ENCODE measurements at regions of chr7 and their contacts with region 1.

Region 1: DNA sequence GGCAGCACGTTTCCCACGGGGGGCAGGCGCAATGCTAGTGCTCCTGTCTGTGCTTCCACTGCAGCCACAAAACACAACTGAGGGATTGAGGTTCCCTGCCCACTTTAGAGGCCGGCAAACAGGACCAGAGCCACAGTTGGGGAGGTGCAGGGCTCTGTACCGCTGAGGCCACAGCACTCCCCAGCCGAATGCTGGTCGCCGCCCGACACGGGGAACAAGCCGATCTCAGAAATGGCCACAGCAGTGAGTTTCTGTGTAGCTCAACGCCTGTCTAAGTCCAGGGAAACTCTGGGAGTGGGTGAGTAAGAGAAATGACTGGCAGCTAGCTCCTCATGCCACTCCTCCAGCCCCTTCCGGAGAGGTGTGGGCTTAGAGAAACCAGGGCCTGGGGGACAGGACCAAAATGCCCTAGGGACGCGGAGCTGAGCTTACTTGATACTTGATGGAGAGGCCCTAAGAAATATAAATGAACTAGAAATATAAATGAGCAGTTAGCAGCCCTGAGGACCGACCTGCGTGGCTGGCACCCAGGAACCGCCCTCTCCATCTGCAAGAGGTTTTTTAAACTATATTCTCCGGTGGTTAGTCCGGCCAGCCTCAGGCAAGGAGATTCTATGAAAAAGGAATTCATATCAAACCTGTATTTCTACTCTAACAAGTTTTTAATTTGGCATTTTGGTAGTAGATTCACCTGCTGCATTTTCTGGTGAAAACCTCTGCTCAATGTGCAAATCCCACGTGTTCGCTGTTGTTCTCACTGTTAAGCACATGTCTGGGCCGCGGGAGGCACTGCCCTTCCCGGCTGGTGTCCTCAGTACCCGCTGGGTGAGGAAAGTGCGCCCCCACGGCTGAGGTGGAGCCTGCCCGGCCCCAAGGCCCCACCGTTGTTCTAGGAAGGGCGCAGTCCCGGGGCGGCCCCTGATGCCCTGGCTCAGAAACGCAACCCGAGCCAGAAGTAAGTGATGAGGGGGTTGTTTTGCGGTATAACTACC is 193.7 kb upstream of the VWC2 start:
- DNase-seq: no peak

Region 2: GRCh38 chr7:49597805-49598204 is 18.1 kb after region 1 on chr7:
- intact Hi-C with region 1: loop called (anchors 1 kb)
- DNase-seq: no peak

Measured in cardiac septum (tissue), 1 donor.